ENCODE measurements at regions of chr16 and their contacts with region 1.

Region 1: GRCh38 chr16:15822957-15823356 is 33.9 kb downstream of the MYH11 start:
- DNase-seq: no peak
- ATAC-seq: peak in 1 of 2 experiments; percentile 23; a peak in 1 of 6 replicates
- H3K4me3 ChIP-seq: no peak overlapping the region
- H3K27ac ChIP-seq: no peak overlapping the region
- H3K4me1 ChIP-seq: no peaks in the 10 kb centered on the region
- CTCF ChIP-seq: no peak
- EP300 ChIP-seq: no peak
- POLR2A ChIP-seq: no peak
- RAD21 ChIP-seq: no peak

Region 2: GRCh38 chr16:15765880-15766279 is 57.1 kb before region 1 on chr16:
- CTCF ChIA-PET with region 1: interaction called, 15 read pairs
- POLR2A ChIA-PET with region 1: no interaction called
- DNase-seq: peak; percentile 58 to 69
- ATAC-seq: peak; percentile 92 to 94
- H3K4me3 ChIP-seq: no peak overlapping the region
- H3K27ac ChIP-seq: no peak overlapping the region
- H3K4me1 ChIP-seq: no peaks in the 10 kb centered on the region
- CTCF ChIP-seq: peak; percentile 78
- EP300 ChIP-seq: no peak
- POLR2A ChIP-seq: no peak
- RAD21 ChIP-seq: peak; percentile 75 to 89

Region 3: DNA sequence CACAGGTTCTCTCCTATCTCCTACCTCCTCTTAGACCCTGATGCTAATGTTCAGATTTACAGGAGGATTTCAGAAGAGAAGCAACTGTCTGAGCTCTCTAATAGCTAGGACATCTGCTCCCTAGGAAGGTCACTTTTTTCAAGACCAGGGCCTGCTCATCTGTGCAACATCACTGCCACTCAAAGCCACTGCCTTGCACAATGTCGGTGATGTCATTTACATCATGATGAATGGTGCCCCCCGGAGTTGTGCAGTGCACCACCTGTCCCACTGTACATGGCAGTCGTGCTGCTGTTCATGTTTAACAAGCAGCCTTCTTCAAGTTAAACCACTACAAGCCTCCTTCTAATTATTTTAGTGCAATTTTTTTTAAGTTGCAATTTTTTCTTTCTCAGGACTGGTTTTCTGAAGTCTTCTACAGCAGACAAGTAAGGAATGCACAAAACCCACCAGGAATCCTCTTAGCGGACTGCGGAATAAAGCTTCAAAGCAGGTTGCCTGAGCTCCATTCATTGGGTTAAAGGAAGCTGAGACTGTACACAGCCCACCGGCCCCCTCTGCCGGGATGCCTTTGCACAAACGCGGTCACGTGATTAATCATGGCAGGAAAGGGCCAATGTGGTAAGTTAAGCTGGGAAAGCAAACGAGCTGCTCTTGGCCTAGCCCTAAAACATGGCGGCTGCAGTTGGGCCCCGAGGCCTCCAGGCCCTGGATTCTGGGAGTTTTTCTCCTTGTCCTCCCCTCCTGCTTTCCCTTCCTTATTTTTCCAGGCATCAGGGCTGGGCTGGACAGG is 40.2 kb before region 1 on chr16:
- CTCF ChIA-PET with region 1: interaction called, 36 read pairs
- POLR2A ChIA-PET with region 1: no interaction called
- DNase-seq: no peak
- ATAC-seq: no peak
- H3K4me3 ChIP-seq: no peak overlapping the region
- H3K27ac ChIP-seq: no peak overlapping the region
- H3K4me1 ChIP-seq: no peaks in the 10 kb centered on the region
- CTCF ChIP-seq: no peak
- EP300 ChIP-seq: no peak
- POLR2A ChIP-seq: no peak
- RAD21 ChIP-seq: no peak

Region 4: DNA sequence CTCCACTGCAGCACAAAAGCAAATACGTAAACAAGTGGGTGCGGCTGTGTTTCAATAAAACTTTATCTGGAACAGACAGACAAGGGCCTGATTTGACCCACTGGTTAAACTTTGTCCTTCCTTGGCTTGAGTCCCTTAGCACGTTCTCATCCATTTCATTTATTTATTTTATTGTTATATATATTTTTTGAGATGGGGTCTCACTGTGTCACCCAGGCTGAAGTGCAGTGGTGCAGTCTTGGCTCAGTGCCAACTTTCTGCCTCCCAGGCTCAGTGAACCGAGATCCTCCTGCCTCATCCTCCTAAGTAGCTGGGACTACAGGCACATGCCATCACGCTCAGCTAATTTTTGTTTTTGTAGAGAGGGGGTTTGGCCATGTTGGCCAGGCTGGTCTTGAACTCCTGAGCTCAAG is 30.4 kb before region 1 on chr16:
- CTCF ChIA-PET with region 1: interaction called, 10 read pairs
- POLR2A ChIA-PET with region 1: no interaction called
- DNase-seq: no peak
- ATAC-seq: no peak
- H3K4me3 ChIP-seq: no peak overlapping the region
- H3K27ac ChIP-seq: no peak overlapping the region
- H3K4me1 ChIP-seq: peaks cover 7% of the 10 kb centered on the region
- CTCF ChIP-seq: no peak
- EP300 ChIP-seq: no peak
- POLR2A ChIP-seq: no peak
- RAD21 ChIP-seq: no peak

Region 5: GRCh38 chr16:15807603-15808009 is 15.4 kb before region 1 on chr16:
- CTCF ChIA-PET with region 1: interaction called, 11 read pairs
- POLR2A ChIA-PET with region 1: no interaction called
- DNase-seq: no peak
- ATAC-seq: no peak
- H3K4me3 ChIP-seq: no peak overlapping the region
- H3K27ac ChIP-seq: no peak overlapping the region
- H3K4me1 ChIP-seq: no peaks in the 10 kb centered on the region
- CTCF ChIP-seq: no peak
- EP300 ChIP-seq: no peak
- POLR2A ChIP-seq: no peak
- RAD21 ChIP-seq: no peak

Region 6: DNA sequence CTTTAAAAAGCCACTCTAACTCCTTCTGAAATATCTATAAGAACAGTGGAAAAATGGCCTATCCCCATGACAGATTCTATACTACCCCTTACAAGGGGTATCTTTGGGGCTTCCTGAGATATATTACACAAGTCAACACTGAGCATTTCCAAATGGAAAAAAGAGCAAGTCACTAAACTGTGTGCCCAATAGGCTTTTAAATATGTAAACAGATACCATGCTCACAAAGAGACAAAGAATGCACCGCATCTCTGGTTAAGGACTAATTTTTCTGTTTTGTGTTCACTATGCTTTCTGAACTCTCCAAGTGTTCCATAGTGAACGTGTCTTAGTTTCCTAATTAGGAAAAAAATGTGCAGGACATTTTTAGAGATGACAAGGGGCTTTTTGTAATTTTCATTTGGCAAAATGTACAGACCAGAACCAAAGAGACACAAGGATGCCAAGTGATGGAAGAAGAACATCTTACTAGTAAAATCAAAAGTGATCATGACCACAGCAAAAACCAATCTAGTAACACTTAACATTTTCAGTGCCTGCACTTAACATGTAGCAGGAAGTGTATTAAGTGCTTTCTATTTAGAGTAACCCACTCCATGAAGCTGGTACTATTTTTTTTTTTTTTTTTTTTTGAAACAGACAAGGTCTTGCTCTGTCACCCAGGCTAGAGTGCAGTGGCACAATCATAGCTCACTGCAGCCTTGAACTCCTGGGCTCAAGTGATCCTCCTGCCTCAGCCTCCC is 12.3 kb after region 1 on chr16:
- CTCF ChIA-PET with region 1: interaction called, 14 read pairs
- POLR2A ChIA-PET with region 1: no interaction called
- DNase-seq: no peak
- ATAC-seq: no peak
- H3K4me3 ChIP-seq: no peak overlapping the region
- H3K27ac ChIP-seq: no peak overlapping the region
- H3K4me1 ChIP-seq: no peaks in the 10 kb centered on the region
- CTCF ChIP-seq: no peak
- EP300 ChIP-seq: no peak
- POLR2A ChIP-seq: no peak
- RAD21 ChIP-seq: no peak

Region 7: DNA sequence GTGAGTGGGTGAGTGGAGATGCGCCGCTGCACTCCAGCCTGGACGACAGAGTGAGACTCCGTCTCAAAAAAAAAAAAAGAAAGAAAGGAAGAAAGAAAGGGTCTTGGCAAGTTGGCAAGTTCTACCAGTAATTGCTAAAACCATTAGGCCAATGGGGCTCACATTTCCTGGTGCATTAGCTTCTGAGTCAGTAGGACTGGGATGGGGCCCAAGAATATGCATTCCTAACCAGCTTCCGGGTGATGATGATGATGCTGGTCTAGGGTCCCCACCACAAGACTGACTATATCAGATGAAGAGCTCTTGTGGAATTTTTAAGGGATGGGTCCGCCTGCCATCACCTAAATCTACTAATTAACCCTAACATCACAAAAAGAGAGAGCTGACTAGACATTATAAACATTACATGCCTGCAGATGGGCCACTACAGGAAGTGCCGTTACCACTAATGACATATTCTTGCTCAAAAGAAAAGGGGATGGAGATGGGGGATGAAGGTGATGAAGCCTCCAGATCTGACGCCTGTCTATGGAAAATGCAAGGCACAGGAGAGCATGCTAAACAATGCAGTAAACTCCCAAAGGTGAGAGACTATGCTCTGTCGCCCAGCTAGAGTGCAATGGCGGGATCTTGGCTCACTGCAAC is 20.8 kb after region 1 on chr16:
- CTCF ChIA-PET with region 1: interaction called, 17 read pairs
- POLR2A ChIA-PET with region 1: no interaction called
- DNase-seq: no peak
- ATAC-seq: no peak
- H3K4me3 ChIP-seq: no peak overlapping the region
- H3K27ac ChIP-seq: no peak overlapping the region
- H3K4me1 ChIP-seq: no peaks in the 10 kb centered on the region
- CTCF ChIP-seq: no peak
- EP300 ChIP-seq: no peak
- POLR2A ChIP-seq: no peak
- RAD21 ChIP-seq: no peak

Region 8: GRCh38 chr16:15858921-15859668 is 36.1 kb after region 1 on chr16:
- CTCF ChIA-PET with region 1: no interaction called
- POLR2A ChIA-PET with region 1: no interaction called
- DNase-seq: no peak
- ATAC-seq: no peak
- H3K4me3 ChIP-seq: no peak overlapping the region
- H3K27ac ChIP-seq: peak overlapping the region in 1 of 2 experiments; percentile 88; a peak in 2 of 6 replicates
- H3K4me1 ChIP-seq: peaks cover 11% of the 10 kb centered on the region; the same call in 1 of the 3 replicates
- CTCF ChIP-seq: no peak
- EP300 ChIP-seq: no peak
- POLR2A ChIP-seq: no peak
- RAD21 ChIP-seq: no peak